Activated T-helper 1 cell treated with anti-CD3 and anti-CD28 coated beads, Interleukin-12 subunit alpha, Interleukin-12 subunit beta, Interleukin-2, Interleukin-4 antibody, amounts not matched to agents 30 ng/mL and 10 ng/mL and 1 ng/mL, durations not matched to agents 14 hours and 24 hours and 36 hours (primary cell): ENCODE measurements at regions of chr2 and their contacts with region 1.

Region 1: GRCh38 chr2:62705007-62705829 is at the start of gene EHBP1:
- DNase-seq: peak; percentile 97
- H3K4me3 Mint-ChIP-seq: peak within 1 kb of the TSS; percentile 85
- H3K27ac Mint-ChIP-seq: peak within 1 kb of the TSS; percentile 61
- H3K4me1 Mint-ChIP-seq: peaks cover 34% of the 10 kb centered on the region
- H3K27me3 Mint-ChIP-seq: peaks cover 6% of the 10 kb centered on the region
- total RNA-seq, gene EHBP1: 23.7 and 24.4 TPM in 2 replicates

Region 2: DNA sequence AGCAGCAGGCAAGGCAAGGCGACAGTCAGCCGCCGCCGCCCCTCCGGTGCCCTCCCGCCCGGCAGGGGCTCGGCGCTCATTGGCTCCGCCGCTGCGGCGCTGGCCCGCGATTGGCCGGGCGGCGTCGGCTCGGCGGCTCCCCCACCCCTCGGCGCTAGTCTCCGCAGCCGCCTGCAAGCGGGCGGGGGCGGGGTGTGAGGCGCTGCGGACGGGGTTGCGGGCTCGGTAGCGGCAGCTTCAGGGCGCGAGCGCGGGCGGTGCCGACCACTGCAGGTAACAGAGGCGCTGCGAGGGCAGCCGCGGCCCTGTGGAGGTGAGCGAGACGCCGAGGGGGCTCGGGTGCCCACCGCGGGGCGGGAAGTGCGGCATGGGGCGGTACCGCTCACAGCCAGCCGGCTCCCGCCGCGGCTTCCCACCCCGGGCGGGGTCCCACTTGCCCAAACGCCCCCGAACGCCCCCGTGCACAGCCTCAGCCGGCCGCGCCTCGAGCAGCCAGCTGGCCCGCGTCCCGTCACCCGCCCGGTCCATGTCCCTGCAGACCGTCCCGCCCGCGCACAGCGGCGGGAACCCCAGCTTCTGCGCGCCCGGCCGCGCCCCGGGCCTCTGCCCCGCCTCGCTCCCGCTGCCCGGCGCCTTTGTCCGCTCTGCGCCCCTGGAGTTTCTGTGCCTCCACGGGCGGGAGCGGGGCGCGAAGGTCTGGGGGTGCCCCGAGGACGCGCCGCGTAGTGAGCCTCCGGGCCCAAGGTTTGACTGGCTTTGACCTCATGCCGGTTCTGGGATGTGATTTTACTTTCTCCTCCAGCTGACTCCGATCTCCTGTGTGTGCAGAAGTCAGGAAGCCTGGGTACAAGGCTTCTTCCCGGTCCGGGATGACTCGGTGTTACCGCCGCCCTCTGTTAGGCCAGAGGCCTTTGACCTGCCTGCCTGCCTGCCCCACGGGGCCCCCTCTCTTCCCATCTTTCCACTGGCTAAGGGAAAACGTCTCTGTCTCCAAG is 1639.2 kb before region 1 on chr2 and contains the start of gene SANBR:
- intact Hi-C with region 1: loop called (anchors 5 kb)
- DNase-seq: peak; percentile 85
- H3K4me3 Mint-ChIP-seq: peak within 1 kb of the TSS; percentile 92
- H3K27ac Mint-ChIP-seq: peak within 1 kb of the TSS; percentile 87
- H3K4me1 Mint-ChIP-seq: peaks cover 16% of the 10 kb centered on the region
- H3K27me3 Mint-ChIP-seq: peaks cover 5% of the 10 kb centered on the region
- total RNA-seq, gene SANBR: 2.0 and 2.2 TPM in 2 replicates

Region 3: DNA sequence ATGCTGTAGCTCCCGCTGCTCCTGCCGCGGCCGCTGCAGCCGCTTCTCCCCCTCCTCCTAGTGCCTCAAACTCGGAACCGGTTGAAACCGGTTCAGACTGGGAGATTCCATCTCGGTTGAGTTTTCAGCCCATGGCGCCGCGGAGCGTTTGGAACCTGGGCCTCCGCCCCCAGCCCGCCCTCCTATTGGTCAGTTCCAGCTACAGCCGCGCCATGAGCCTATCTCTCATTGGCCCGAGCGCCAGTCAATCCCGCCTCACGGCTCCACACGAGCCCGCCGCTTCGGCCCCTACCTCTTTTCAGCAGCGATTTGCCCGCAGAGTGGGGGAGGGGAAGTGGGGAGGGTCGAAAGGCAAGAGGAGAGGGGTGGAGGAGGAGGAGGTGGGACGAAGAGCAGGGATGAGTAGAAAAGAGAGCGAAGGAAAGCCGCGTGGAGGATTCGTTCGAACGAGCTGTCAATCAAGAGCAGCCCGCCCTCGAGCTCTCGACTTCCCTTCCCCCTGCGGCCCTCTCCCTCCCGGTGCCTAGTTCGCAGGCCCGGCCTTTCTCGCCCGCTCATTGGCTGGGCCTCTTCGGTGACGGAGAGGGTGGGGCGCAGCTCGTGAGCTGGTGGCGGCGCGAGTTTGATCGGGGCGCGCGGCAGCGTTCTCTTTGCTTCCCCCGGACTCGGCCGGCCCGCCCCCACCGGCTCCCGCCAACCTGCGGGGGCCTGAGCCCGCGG is 1166.9 kb before region 1 on chr2 and contains the start of gene XPO1:
- intact Hi-C with region 1: loop called (anchors 10 kb)
- DNase-seq: peak; percentile 99
- H3K4me3 Mint-ChIP-seq: peak within 1 kb of the TSS; percentile 100
- H3K27ac Mint-ChIP-seq: peak within 1 kb of the TSS; percentile 100
- H3K4me1 Mint-ChIP-seq: peaks cover 35% of the 10 kb centered on the region
- H3K27me3 Mint-ChIP-seq: peaks cover 4% of the 10 kb centered on the region
- total RNA-seq, gene XPO1: 213 and 215 TPM in 2 replicates

Region 4: DNA sequence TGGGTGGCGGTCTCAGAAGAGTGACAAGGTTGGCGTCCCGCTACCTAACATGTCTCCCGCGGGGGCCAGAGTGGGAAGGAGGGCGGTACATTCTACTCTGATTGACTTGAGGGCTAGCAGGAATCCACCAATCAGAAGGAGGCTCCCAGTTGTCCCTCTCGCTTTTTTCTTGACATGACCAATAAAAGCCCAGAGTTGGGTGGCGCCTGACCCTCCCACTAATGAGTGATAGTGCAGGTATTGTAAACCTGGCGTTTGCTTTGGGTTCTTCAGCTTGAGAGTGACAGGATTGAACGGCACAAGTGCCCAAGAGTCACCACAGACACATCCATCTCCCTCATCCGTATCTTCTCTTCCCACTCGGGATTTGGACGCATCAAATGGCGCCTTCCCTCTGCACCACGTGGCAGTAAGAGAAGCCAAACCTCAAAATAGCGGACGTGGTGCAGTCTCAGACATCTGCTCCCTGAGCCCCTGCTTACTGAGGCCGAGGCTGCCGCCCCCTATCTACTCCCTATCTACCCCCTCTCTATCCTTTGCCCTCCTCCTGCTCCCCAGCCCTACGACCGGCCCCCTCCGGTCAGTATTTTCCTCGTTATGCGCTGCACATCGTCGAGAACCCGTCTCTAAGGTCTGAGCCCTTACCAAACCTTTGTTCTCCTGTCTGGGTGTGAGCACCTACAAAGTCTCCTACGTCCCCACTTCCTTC is 850.6 kb before region 1 on chr2:
- intact Hi-C with region 1: loop called (anchors 1 kb)
- DNase-seq: peak; percentile 87
- H3K4me3 Mint-ChIP-seq: peak overlapping the region; percentile 98
- H3K27ac Mint-ChIP-seq: peak overlapping the region; percentile 88
- H3K4me1 Mint-ChIP-seq: peaks cover 23% of the 10 kb centered on the region
- H3K27me3 Mint-ChIP-seq: no peaks in the 10 kb centered on the region

Region 5: GRCh38 chr2:62195421-62196277 is 509.6 kb before region 1 on chr2 and contains the start of gene B3GNT2:
- intact Hi-C with region 1: loop called (anchors 1 kb)
- DNase-seq: peak; percentile 75
- H3K4me3 Mint-ChIP-seq: peak within 1 kb of the TSS; percentile 87
- H3K27ac Mint-ChIP-seq: peak within 1 kb of the TSS; percentile 89
- H3K4me1 Mint-ChIP-seq: peaks cover 36% of the 10 kb centered on the region
- H3K27me3 Mint-ChIP-seq: no peaks in the 10 kb centered on the region
- total RNA-seq, gene B3GNT2: 32.8 and 37.3 TPM in 2 replicates

Region 6: DNA sequence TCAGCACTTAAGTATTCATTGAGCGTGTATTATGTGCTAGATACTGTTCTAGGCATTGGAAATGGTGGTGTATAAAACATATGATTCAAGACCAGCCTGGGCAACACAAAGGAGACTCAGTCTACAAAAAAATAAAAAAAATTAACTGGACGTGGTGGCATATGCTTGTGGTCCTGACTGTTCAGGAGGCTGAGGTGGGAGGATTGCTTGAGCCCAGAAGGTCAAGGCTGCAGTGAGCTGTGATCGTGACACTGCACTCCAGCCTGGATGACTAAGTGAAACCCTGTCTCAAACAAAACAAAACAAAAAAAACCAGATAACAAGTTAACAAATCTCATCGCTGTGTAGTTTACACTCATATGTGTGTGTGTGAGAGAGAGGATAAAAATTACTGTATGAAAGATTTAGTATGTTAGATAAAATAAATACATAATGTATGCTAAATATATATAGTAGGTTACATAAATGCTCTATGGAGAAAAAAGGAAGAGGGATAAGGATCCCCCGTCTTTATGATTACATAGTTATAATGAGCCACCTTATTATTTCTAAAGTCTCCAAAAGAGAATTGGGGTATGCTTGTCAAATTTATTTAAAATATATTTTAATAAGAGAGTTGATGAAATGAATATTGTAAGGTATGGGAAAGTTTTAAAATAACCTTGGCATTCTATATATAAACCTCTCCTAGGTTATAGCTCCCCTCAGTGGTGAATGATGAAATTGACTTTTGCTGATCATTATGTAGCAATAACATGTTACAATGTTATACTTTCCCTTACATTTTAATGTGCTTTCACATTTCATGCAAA is 69.5 kb after region 1 on chr2:
- intact Hi-C with region 1: loop called (anchors 1 kb)
- DNase-seq: no peak
- H3K4me3 Mint-ChIP-seq: no peak overlapping the region
- H3K27ac Mint-ChIP-seq: no peak overlapping the region
- H3K4me1 Mint-ChIP-seq: no peaks in the 10 kb centered on the region
- H3K27me3 Mint-ChIP-seq: no peaks in the 10 kb centered on the region

Region 7: GRCh38 chr2:63841254-63842022 is 1136.2 kb after region 1 on chr2 and contains the start of gene UGP2:
- intact Hi-C with region 1: loop called (anchors 1 kb)
- DNase-seq: peak; percentile 83
- H3K4me3 Mint-ChIP-seq: peak within 1 kb of the TSS; percentile 99
- H3K27ac Mint-ChIP-seq: peak within 1 kb of the TSS; percentile 99
- H3K4me1 Mint-ChIP-seq: peaks cover 47% of the 10 kb centered on the region
- H3K27me3 Mint-ChIP-seq: no peaks in the 10 kb centered on the region
- total RNA-seq, gene UGP2: 60.3 and 65.9 TPM in 2 replicates